HepG2 (cell line): ENCODE measurements at regions of chr6 and their contacts with region 1.

Region 1: DNA sequence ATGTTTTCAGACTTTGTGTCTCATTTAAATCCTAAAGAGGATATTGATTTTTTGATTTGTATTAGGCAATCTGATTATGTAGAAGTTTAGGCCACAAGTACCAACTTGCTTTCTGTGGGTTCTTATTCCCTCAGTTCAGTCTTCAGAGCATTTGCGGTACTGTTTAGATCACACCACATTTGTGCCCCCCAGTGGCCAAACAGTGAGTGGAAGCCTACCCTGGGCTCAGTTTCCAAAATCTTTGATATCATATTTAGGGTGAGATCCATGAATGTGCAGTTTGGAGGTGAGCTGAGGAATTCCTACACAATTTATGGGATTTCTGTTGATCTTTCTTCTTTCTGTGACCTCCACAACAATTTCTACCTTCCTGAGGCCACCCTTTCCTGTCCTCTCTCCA is 92.3 kb upstream of the FUT9 start:
- DNase-seq: peak; percentile 42
- ATAC-seq: peak; percentile 89
- H3K4me3 ChIP-seq: no peak overlapping the region
- H3K27ac ChIP-seq: no peak overlapping the region
- H3K4me1 ChIP-seq: no peaks in the 10 kb centered on the region
- H3K27me3 ChIP-seq: no peaks in the 10 kb centered on the region
- CTCF ChIP-seq: peak; percentile 72
- EP300 ChIP-seq: no peak
- POLR2A ChIP-seq: no peak
- RAD21 ChIP-seq: 0 out of 2 replicates have a peak, but pooled peaks have one; percentile 26

Region 2: DNA sequence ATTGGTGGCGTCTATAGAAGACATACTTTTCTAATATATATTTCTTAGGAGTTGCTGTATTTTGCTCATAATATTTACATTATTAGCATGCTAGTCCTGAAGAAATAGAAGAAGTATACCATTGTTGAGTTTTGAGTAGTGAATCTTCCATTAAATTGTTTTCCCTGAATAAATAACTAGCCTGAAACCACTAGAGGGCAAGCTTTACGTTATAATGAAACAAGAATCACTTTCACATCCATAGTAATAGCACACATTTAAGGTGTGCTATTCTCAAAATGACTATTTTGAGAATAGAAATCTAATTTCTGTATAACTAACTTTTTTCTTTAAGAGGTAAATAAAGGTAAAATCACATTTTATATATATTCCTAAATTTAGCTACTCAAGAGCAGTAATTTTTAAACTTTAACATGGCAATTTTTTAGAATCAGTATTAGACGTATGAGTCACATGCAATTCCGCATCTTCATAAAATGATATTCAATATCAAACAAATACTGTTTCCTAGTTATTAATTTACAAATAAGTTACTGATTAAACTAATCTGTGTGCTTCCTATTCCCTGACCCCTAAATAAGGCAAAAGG is 559.4 kb before region 1 on chr6:
- CTCF ChIA-PET with region 1: no interaction called
- POLR2A ChIA-PET with region 1: no interaction called
- in situ Hi-C with region 1: no loop called
- intact Hi-C with region 1: loop called (anchors 10 kb)
- DNase-seq: peak; percentile 20
- ATAC-seq: 0 out of 3 replicates have a peak, but pooled peaks have one; percentile 46
- H3K4me3 ChIP-seq: no peak overlapping the region
- H3K27ac ChIP-seq: no peak overlapping the region
- H3K4me1 ChIP-seq: no peaks in the 10 kb centered on the region
- H3K27me3 ChIP-seq: no peaks in the 10 kb centered on the region
- CTCF ChIP-seq: no peak
- EP300 ChIP-seq: no peak
- POLR2A ChIP-seq: no peak
- RAD21 ChIP-seq: no peak

Region 3: GRCh38 chr6:95431637-95432228 is 491.8 kb before region 1 on chr6:
- CTCF ChIA-PET with region 1: interaction called, 6 read pairs
- POLR2A ChIA-PET with region 1: no interaction called
- in situ Hi-C with region 1: loop called (anchors 25 kb)
- intact Hi-C with region 1: loop called (anchors 2 kb)
- DNase-seq: peak; percentile 9
- ATAC-seq: no peak
- H3K4me3 ChIP-seq: no peak overlapping the region
- H3K27ac ChIP-seq: no peak overlapping the region
- H3K4me1 ChIP-seq: no peaks in the 10 kb centered on the region
- H3K27me3 ChIP-seq: no peaks in the 10 kb centered on the region
- CTCF ChIP-seq: peak; percentile 59
- EP300 ChIP-seq: no peak
- POLR2A ChIP-seq: no peak
- RAD21 ChIP-seq: no peak

Region 4: DNA sequence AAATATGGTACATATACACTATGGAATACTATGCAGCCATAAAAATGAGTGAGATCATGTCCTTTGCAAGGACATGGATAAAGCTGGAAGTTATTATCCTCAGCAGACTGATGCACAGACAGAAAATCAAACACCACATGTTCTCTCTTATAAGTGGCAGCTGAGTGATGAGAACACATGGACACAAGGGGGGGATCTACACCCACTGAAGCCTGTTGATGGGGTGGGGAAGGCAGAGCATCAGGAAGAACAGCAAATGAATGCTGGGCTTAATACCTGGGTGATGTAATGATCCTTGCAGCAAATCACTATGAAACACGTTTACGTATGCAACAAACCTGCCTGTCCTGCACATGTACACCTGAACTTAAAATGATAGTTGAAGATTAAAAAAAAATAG is 274.9 kb before region 1 on chr6:
- CTCF ChIA-PET with region 1: interaction called, 18 read pairs
- POLR2A ChIA-PET with region 1: no interaction called
- in situ Hi-C with region 1: loop called (anchors 10 kb)
- intact Hi-C with region 1: loop called (anchors 1 kb)
- DNase-seq: peak; percentile 46
- ATAC-seq: peak; percentile 90
- H3K4me3 ChIP-seq: no peak overlapping the region
- H3K27ac ChIP-seq: no peak overlapping the region
- H3K4me1 ChIP-seq: no peaks in the 10 kb centered on the region
- H3K27me3 ChIP-seq: no peaks in the 10 kb centered on the region
- CTCF ChIP-seq: peak; percentile 74
- EP300 ChIP-seq: no peak
- POLR2A ChIP-seq: no peak
- RAD21 ChIP-seq: peak; percentile 41; the same call in 1 of the 2 replicates

Region 5: GRCh38 chr6:95723638-95724037 is 199.9 kb before region 1 on chr6:
- CTCF ChIA-PET with region 1: no interaction called
- POLR2A ChIA-PET with region 1: no interaction called
- in situ Hi-C with region 1: no loop called
- intact Hi-C with region 1: loop called (anchors 2 kb)
- DNase-seq: no peak
- ATAC-seq: no peak
- H3K4me3 ChIP-seq: no peak overlapping the region
- H3K27ac ChIP-seq: no peak overlapping the region
- H3K4me1 ChIP-seq: no peaks in the 10 kb centered on the region
- H3K27me3 ChIP-seq: no peaks in the 10 kb centered on the region
- CTCF ChIP-seq: no peak
- EP300 ChIP-seq: no peak
- POLR2A ChIP-seq: no peak
- RAD21 ChIP-seq: no peak

Region 6: DNA sequence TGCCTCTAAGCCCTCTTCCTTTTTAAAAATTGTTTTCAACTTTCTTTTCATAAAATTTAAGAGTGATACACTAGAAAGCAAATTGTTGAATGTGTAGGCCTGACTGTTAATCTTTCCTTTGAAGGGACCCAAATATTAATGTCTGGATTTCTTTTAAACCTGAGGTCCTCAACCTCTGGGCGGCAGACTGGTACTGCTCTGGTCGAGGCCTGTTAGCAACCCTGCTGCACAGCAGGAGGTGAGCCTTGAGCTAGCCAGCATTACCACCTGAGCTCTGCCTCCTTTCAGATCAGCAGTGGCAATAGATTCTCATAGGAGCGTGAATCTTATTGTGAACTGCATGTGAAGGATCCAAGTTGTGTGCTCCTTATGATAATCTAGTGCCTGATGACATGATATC is 155.0 kb before region 1 on chr6:
- CTCF ChIA-PET with region 1: no interaction called
- POLR2A ChIA-PET with region 1: no interaction called
- in situ Hi-C with region 1: no loop called
- intact Hi-C with region 1: loop called (anchors 1 kb)
- DNase-seq: peak; percentile 49
- ATAC-seq: peak; percentile 99
- H3K4me3 ChIP-seq: no peak overlapping the region
- H3K27ac ChIP-seq: no peak overlapping the region
- H3K4me1 ChIP-seq: 0 out of 2 replicates have a peak, but pooled peaks cover 5% of the 10 kb centered on the region
- H3K27me3 ChIP-seq: no peaks in the 10 kb centered on the region
- CTCF ChIP-seq: peak; percentile 77
- EP300 ChIP-seq: no peak
- POLR2A ChIP-seq: no peak
- RAD21 ChIP-seq: peak; percentile 86

Region 7: GRCh38 chr6:95866732-95867131 is 56.8 kb before region 1 on chr6:
- CTCF ChIA-PET with region 1: no interaction called
- POLR2A ChIA-PET with region 1: no interaction called
- in situ Hi-C with region 1: no loop called
- intact Hi-C with region 1: loop called (anchors 1 kb)
- DNase-seq: peak; percentile 41
- ATAC-seq: peak; percentile 88
- H3K4me3 ChIP-seq: no peak overlapping the region
- H3K27ac ChIP-seq: no peak overlapping the region
- H3K4me1 ChIP-seq: no peaks in the 10 kb centered on the region; the same call in 1 of the 2 replicates
- H3K27me3 ChIP-seq: no peaks in the 10 kb centered on the region
- CTCF ChIP-seq: peak; percentile 79
- EP300 ChIP-seq: no peak
- POLR2A ChIP-seq: no peak
- RAD21 ChIP-seq: peak; percentile 73